ENCODE measurements at regions of chr5 and their contacts with region 1.

Region 1: DNA sequence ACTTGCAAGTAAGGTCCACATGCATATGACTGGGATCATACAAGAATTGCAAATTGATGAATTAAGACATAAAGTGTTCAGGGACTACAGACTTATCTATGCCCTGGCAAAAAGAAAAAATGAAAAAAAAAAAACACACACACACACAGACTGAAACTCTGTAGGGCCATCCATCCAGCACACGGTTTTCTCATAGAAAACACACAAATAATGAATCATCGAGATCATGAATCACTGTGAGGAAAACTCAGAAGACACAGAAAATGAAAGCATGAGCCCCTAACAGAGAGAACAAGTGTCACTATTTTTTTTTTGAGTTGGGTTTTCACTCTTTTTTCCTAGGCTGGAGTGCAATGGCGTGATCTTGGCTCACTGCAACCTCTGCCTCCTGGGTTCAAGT is 185.2 kb downstream of the IRX2 start:
- DNase-seq: no peak
- ATAC-seq: no peak
- H3K4me3 ChIP-seq: no peak overlapping the region
- H3K27ac ChIP-seq: no peak overlapping the region
- H3K4me1 ChIP-seq: no peaks in the 10 kb centered on the region
- H3K27me3 ChIP-seq: peaks cover 0 to 11% (median 5%) of the 10 kb centered on the region in 7 donors
- CTCF ChIP-seq: no peak

Region 2: GRCh38 chr5:2542821-2543220 is 23.5 kb before region 1 on chr5:
- intact Hi-C with region 1: loop called in 1 of 10 experiments (anchors 1 kb)
- DNase-seq: no peak
- ATAC-seq: no peak
- H3K4me3 ChIP-seq: no peak overlapping the region
- H3K27ac ChIP-seq: no peak overlapping the region
- H3K4me1 ChIP-seq: no peaks in the 10 kb centered on the region
- H3K27me3 ChIP-seq: peaks cover 0 to 11% (median 0%) of the 10 kb centered on the region in 7 donors
- CTCF ChIP-seq: no peak

Region 3: DNA sequence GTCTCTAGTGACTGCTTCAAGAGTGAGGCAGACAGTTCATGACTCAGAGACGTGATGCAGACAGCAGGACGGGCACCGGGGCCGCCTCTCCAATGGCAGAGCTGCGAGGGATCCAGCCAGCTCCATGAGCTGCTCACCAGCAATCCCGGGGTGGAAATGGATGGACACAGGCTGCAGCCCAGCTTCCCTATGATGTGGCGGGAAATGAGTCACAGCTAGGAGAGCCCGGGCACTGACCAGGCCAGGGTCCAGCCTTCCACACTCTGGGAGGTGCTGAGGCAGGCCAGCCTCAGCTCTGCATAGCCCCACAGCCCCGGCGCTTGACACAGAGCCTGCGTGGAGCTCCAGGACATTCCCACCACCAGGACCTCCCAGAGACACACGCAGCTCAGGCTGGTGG is 430.0 kb after region 1 on chr5:
- intact Hi-C with region 1: no loop called
- DNase-seq: no peak
- ATAC-seq: no peak
- H3K4me3 ChIP-seq: no peak overlapping the region
- H3K27ac ChIP-seq: no peak overlapping the region
- H3K4me1 ChIP-seq: no peaks in the 10 kb centered on the region
- H3K27me3 ChIP-seq: peaks cover 0 to 29% (median 0%) of the 10 kb centered on the region in 7 donors
- CTCF ChIP-seq: no peak

Measured in heart right ventricle (tissue), 16 donors.